IMR-90 (cell line): ENCODE measurements at regions of chr12 and their contacts with region 1.

Region 1: GRCh38 chr12:56468216-56469006 is at the start of gene SPRYD4:
- DNase-seq: peak; percentile 90
- ATAC-seq: peak; percentile 93
- H3K4me3 ChIP-seq: peak within 1 kb of the TSS; percentile 84
- H3K27ac ChIP-seq: peak within 1 kb of the TSS; percentile 64
- H3K4me1 ChIP-seq: peaks cover 4% of the 10 kb centered on the region
- H3K27me3 ChIP-seq: no peaks in the 10 kb centered on the region
- CTCF ChIP-seq: peak; percentile 36
- POLR2A ChIP-seq: peak; percentile 85
- RAD21 ChIP-seq: no peak
- total RNA-seq, gene SPRYD4: 1.4 and 1.8 TPM in 2 replicates

Region 2: GRCh38 chr12:55250944-55251343 is 1217.5 kb before region 1 on chr12:
- CTCF ChIA-PET with region 1: no interaction called
- POLR2A ChIA-PET with region 1: no interaction called
- dilution Hi-C with region 1: no loop called
- in situ Hi-C with region 1: no loop called
- intact Hi-C with region 1: no loop called
- DNase-seq: no peak
- ATAC-seq: no peak
- H3K4me3 ChIP-seq: no peak overlapping the region
- H3K27ac ChIP-seq: no peak overlapping the region
- H3K4me1 ChIP-seq: no peaks in the 10 kb centered on the region
- H3K27me3 ChIP-seq: no peaks in the 10 kb centered on the region
- CTCF ChIP-seq: no peak
- POLR2A ChIP-seq: no peak
- RAD21 ChIP-seq: no peak

Region 3: GRCh38 chr12:56258057-56258819 is 210.2 kb before region 1 on chr12 and contains the start of gene ANKRD52:
- CTCF ChIA-PET with region 1: no interaction called
- POLR2A ChIA-PET with region 1: no interaction called
- dilution Hi-C with region 1: no loop called
- in situ Hi-C with region 1: no loop called
- intact Hi-C with region 1: loop called (anchors 2 kb)
- DNase-seq: peak; percentile 71
- ATAC-seq: peak; percentile 86
- H3K4me3 ChIP-seq: peak within 1 kb of the TSS; percentile 94
- H3K27ac ChIP-seq: peak within 1 kb of the TSS; percentile 94
- H3K4me1 ChIP-seq: peaks cover 22% of the 10 kb centered on the region
- H3K27me3 ChIP-seq: no peaks in the 10 kb centered on the region
- CTCF ChIP-seq: peak; percentile 82
- POLR2A ChIP-seq: no peak
- RAD21 ChIP-seq: peak; percentile 34
- total RNA-seq, gene ANKRD52: 15.4 and 16.1 TPM in 2 replicates

Region 4: DNA sequence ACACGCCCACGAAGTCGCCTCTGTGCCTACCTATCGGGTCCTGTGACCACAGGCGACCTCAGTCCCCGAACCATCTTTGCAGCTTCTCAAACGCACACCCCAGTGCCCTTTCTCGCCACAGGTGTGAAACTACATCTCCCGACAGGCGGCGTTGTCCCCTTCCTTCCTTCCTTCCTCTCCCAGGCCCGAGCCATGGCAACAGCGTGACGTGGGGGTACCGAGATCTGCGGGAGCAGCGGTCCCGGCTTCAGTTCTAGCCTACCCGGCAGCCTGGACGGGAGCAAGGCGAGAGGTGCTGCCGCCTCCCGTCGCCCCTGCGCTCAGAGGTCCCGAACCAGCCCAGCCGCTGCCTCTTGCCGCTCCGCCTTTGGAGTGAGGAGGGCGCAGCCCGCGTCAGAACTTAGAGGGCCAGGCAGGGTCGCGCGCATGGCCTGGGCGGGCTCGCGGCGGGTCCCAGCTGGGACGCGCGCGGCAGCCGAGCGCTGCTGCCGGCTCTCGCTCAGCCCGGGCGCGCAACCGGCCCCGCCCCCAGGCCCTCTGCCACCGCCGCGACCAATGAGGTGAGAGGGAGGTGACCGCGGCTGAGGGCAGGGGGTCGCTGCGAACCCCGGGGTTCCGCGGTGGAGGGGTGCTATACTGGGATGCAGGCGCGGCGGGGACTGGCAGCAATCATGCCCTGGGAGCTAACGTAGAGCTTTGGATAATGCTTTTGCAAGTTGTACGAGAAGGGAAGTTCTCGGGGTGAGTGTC is 201.5 kb before region 1 on chr12 and contains the start of gene COQ10A:
- CTCF ChIA-PET with region 1: no interaction called
- POLR2A ChIA-PET with region 1: no interaction called
- dilution Hi-C with region 1: no loop called
- in situ Hi-C with region 1: no loop called
- intact Hi-C with region 1: loop called (anchors 2 kb)
- DNase-seq: peak; percentile 82
- ATAC-seq: peak; percentile 96
- H3K4me3 ChIP-seq: peak within 1 kb of the TSS; percentile 61
- H3K27ac ChIP-seq: peak within 1 kb of the TSS; percentile 78
- H3K4me1 ChIP-seq: peaks cover 10% of the 10 kb centered on the region
- H3K27me3 ChIP-seq: no peaks in the 10 kb centered on the region
- CTCF ChIP-seq: peak; percentile 59
- POLR2A ChIP-seq: peak; percentile 87
- RAD21 ChIP-seq: no peak; the same call in 1 of the 2 replicates
- total RNA-seq, gene COQ10A: 4.7 TPM in 2 replicates

Region 5: GRCh38 chr12:56333679-56334489 is 134.5 kb before region 1 on chr12 and contains the start of gene PAN2:
- CTCF ChIA-PET with region 1: no interaction called
- POLR2A ChIA-PET with region 1: interaction called, 3 read pairs
- dilution Hi-C with region 1: no loop called
- in situ Hi-C with region 1: no loop called
- intact Hi-C with region 1: loop called (anchors 1 kb)
- DNase-seq: peak; percentile 97
- ATAC-seq: peak; percentile 99
- H3K4me3 ChIP-seq: peak within 1 kb of the TSS; percentile 56
- H3K27ac ChIP-seq: peak within 1 kb of the TSS; percentile 74
- H3K4me1 ChIP-seq: peaks cover 5% of the 10 kb centered on the region; the same call in 1 of the 2 replicates
- H3K27me3 ChIP-seq: no peaks in the 10 kb centered on the region
- CTCF ChIP-seq: peak; percentile 68
- POLR2A ChIP-seq: peak; percentile 85
- RAD21 ChIP-seq: no peak; the same call in 1 of the 2 replicates
- total RNA-seq, gene PAN2: 7.5 and 9.7 TPM in 2 replicates

Region 6: GRCh38 chr12:56359851-56360767 is 108.3 kb before region 1 on chr12 and contains the start of gene STAT2:
- CTCF ChIA-PET with region 1: no interaction called
- POLR2A ChIA-PET with region 1: no interaction called
- dilution Hi-C with region 1: no loop called
- in situ Hi-C with region 1: loop called (anchors 10 kb)
- intact Hi-C with region 1: loop called (anchors 1 kb)
- DNase-seq: peak; percentile 100
- ATAC-seq: peak; percentile 97
- H3K4me3 ChIP-seq: peak within 1 kb of the TSS; percentile 62
- H3K27ac ChIP-seq: peak within 1 kb of the TSS; percentile 85
- H3K4me1 ChIP-seq: no peaks in the 10 kb centered on the region
- H3K27me3 ChIP-seq: no peaks in the 10 kb centered on the region
- CTCF ChIP-seq: no peak
- POLR2A ChIP-seq: peak; percentile 65; the same call in 1 of the 2 replicates
- RAD21 ChIP-seq: no peak
- total RNA-seq, gene STAT2: 125 and 182 TPM in 2 replicates